ENCODE measurements at regions of chr11 and their contacts with region 1.

Region 1: DNA sequence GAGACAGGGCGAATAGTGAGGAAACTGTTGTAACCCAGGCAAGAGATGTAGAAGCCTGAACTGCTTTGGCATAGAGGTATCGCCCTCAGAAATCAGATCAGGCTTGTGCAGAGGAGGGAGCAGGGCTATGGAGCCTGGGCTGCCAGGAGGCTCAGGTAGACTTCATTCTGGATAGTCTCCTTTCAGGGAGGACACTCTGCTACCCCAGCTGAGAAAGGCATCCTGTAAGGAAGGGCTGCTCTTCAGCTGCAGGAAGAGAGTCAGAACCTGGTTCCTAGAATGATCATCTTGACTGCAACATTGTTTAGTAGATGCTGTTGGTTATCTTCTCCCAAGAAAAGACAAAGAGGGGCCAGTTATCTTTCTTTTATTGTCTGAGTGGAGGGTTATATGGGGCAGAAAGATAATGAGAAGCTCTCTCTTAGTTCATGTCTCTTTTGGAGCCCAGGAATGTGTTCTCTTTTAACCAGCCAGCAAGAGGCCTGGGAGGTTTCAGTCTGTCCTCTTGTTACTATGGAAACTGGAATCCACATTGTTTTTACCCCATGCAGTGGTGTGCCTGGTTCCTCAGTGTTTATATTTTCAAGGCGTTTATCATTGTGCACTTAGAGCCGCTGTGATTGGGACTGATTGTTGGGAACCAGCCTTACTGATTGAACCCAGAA is 95.7 kb downstream of the STIM1 start:
- DNase-seq: peak in 1 of 4 experiments; percentile 31
- ATAC-seq: peak; percentile 20
- H3K4me3 ChIP-seq: no peak overlapping the region
- H3K27ac ChIP-seq: no peak overlapping the region; the same call in 2 of the 3 replicates
- H3K4me1 ChIP-seq: peaks cover 11 to 38% of the 10 kb centered on the region in 2 experiments; a peak in 4 of 5 replicates
- H3K27me3 ChIP-seq: no peaks in the 10 kb centered on the region
- CTCF ChIP-seq: no peak
- EP300 ChIP-seq: no peak
- POLR2A ChIP-seq: no peak
- RAD21 ChIP-seq: no peak

Region 2: DNA sequence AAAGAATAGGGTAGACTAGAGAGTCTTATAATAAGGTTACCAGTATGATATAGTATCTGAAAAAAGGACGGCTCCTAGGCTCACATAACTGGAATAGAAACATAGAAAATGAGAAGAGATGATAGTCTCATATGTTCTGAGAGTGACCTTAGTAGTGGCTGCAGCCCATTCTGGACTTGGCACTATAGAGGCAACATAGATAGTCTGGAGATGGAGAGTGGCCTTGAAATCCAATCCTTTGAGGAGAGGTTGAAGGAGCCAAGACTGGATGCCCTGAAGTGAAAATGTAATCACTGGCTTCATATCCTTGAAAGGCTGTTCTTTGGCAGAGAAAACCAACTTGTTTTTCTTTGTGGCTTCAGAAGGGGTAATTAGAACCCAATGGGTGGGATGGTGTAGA is 14.6 kb before region 1 on chr11:
- CTCF ChIA-PET with region 1: no interaction called
- POLR2A ChIA-PET with region 1: interaction called, 13 read pairs
- in situ Hi-C with region 1: no loop called
- intact Hi-C with region 1: no loop called
- DNase-seq: no peak
- ATAC-seq: no peak
- H3K4me3 ChIP-seq: no peak overlapping the region
- H3K27ac ChIP-seq: no peak overlapping the region
- H3K4me1 ChIP-seq: peaks cover 0 to 12% of the 10 kb centered on the region in 2 experiments; a peak in 1 of 5 replicates
- H3K27me3 ChIP-seq: no peaks in the 10 kb centered on the region
- CTCF ChIP-seq: no peak
- EP300 ChIP-seq: no peak
- POLR2A ChIP-seq: no peak
- RAD21 ChIP-seq: no peak